Activated CD4-positive, alpha-beta memory T cell treated with anti-CD3 and anti-CD28 coated beads for 36 hours (primary cell): ENCODE measurements at regions of chr18 and their contacts with region 1.

Region 1: GRCh38 chr18:42028247-42028832 is 73.3 kb downstream of the PIK3C3 start:
- DNase-seq: peak; percentile 23
- H3K4me3 Mint-ChIP-seq: no peak overlapping the region
- H3K27ac Mint-ChIP-seq: no peak overlapping the region
- H3K4me1 Mint-ChIP-seq: peaks cover 28% of the 10 kb centered on the region
- H3K27me3 Mint-ChIP-seq: no peaks in the 10 kb centered on the region

Region 2: GRCh38 chr18:41881285-41881684 is 147.1 kb before region 1 on chr18:
- CTCF ChIA-PET with region 1: no interaction called
- POLR2A ChIA-PET with region 1: no interaction called
- intact Hi-C with region 1: no loop called
- DNase-seq: no peak
- H3K4me3 Mint-ChIP-seq: no peak overlapping the region
- H3K27ac Mint-ChIP-seq: no peak overlapping the region
- H3K4me1 Mint-ChIP-seq: no peaks in the 10 kb centered on the region
- H3K27me3 Mint-ChIP-seq: no peaks in the 10 kb centered on the region

Region 3: DNA sequence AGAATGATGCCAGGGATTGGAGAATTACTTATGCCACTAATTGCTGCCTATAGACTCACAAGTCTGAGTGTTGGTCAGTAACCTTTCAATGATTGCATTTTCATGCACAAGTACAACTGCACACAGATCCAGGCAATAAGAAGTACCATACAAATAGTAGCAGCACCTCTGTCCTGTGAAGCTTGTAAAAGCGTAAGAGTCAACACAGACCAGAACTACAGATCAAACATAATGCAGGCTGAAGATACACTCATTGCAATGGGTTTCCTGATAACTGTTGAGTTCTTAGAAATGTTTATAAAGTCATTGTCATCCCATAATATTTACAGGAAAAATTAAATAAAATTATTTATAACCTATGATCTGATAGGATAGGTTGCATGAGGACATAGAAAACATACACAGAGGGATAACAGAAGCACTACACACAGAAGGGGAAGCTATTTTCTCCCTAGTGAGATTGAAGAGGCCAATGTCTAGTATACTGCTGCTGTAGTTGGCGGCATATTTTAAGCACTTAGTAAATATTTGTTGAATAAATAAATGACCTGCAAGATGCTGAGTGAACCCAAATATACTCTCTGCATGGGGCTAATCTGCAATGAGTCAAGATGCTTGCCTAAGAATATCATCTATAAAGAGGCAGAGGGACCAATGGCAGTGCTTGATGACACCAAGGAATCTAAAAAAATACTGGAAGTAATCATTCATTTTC is 79.0 kb before region 1 on chr18:
- CTCF ChIA-PET with region 1: interaction called, 6 read pairs
- POLR2A ChIA-PET with region 1: no interaction called
- intact Hi-C with region 1: loop called (anchors 1 kb)
- DNase-seq: no peak
- H3K4me3 Mint-ChIP-seq: no peak overlapping the region
- H3K27ac Mint-ChIP-seq: peak overlapping the region; percentile 76
- H3K4me1 Mint-ChIP-seq: peaks cover 21% of the 10 kb centered on the region
- H3K27me3 Mint-ChIP-seq: peaks cover 21% of the 10 kb centered on the region

Region 4: DNA sequence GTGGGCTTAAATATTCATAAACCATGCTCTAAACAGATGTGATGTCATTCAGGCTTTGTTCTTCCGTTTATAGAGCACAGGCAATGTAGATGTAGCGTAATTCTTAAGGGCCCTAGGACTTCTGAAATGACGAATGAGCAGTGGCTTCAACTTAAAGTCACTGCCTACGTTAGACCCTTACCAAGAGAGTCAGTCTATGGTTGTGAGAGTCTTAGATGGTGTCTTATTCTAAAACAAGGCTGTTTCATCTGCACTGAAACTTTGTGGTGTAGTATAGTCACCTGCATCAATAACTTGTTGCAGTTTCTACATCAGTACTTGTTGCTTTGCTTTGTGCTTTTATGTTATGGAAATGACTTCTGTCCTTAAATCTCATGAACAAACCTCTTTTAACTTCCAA is 17.3 kb before region 1 on chr18:
- CTCF ChIA-PET with region 1: interaction called, 42 read pairs
- POLR2A ChIA-PET with region 1: no interaction called
- intact Hi-C with region 1: loop called (anchors 1 kb)
- DNase-seq: no peak
- H3K4me3 Mint-ChIP-seq: no peak overlapping the region
- H3K27ac Mint-ChIP-seq: no peak overlapping the region
- H3K4me1 Mint-ChIP-seq: peaks cover 13% of the 10 kb centered on the region
- H3K27me3 Mint-ChIP-seq: no peaks in the 10 kb centered on the region

Region 5: DNA sequence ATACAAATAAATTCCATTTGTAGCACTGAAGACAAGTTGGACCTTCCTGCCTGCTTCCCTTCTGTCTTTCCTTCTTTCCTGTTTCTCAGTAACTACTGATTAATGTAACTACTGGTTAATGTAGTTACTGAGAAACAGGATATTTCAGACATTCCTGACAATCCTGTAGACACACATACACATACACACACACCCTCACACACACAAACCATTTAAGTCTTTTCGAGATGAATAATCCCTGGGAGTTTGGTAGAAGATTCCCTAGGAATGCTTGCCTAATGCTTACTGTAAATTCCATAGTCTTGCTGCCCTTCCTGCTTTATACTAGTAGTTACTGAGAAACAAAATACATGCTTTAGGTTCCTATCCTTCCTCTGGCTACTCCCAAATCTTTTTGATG is 10.6 kb after region 1 on chr18:
- CTCF ChIA-PET with region 1: interaction called, 11 read pairs
- POLR2A ChIA-PET with region 1: no interaction called
- intact Hi-C with region 1: no loop called
- DNase-seq: no peak
- H3K4me3 Mint-ChIP-seq: no peak overlapping the region
- H3K27ac Mint-ChIP-seq: no peak overlapping the region
- H3K4me1 Mint-ChIP-seq: no peaks in the 10 kb centered on the region
- H3K27me3 Mint-ChIP-seq: no peaks in the 10 kb centered on the region